ENCODE measurements at regions of chr1 and their contacts with region 1.

Region 1: DNA sequence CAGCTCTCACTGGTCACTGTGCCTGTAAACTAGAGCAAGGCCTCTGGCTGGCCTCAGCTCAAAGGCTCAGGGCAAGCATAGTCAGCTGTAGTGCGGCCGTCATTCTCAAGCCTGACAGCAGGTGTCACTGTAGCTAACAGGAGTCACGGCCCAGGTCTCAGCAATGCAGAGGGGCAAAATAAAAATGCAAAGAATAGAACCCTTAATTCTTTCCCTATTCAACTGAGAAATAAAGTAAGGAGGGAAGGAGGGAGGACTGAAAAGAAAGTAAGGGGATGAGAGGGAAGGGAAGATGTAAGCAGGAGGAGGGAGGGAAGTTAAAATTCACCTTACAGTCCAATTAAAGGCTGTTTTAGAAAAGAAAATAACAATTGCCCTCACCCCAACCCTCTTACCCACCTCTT is 106.1 kb downstream of the KIAA0319L start:
- DNase-seq: peak; percentile 86
- ATAC-seq: peak; percentile 96
- H3K4me3 Mint-ChIP-seq: no peak overlapping the region
- H3K27ac Mint-ChIP-seq: peak overlapping the region; percentile 85; the same call in 1 of the 2 replicates
- H3K4me1 Mint-ChIP-seq: no peaks in the 10 kb centered on the region
- H3K27me3 Mint-ChIP-seq: no peaks in the 10 kb centered on the region
- CTCF ChIP-seq: peak; percentile 67

Region 2: GRCh38 chr1:35398739-35399138 is 52.4 kb before region 1 on chr1:
- CTCF ChIA-PET with region 1: no interaction called
- POLR2A ChIA-PET with region 1: no interaction called
- DNase-seq: no peak
- ATAC-seq: no peak
- H3K4me3 Mint-ChIP-seq: no peak overlapping the region
- H3K27ac Mint-ChIP-seq: no peak overlapping the region
- H3K4me1 Mint-ChIP-seq: peaks cover 17% of the 10 kb centered on the region
- H3K27me3 Mint-ChIP-seq: no peaks in the 10 kb centered on the region
- CTCF ChIP-seq: no peak

Region 3: GRCh38 chr1:35436078-35436477 is 15.0 kb before region 1 on chr1:
- CTCF ChIA-PET with region 1: interaction called, 13 read pairs
- POLR2A ChIA-PET with region 1: no interaction called
- DNase-seq: no peak
- ATAC-seq: no peak
- H3K4me3 Mint-ChIP-seq: no peak overlapping the region
- H3K27ac Mint-ChIP-seq: no peak overlapping the region
- H3K4me1 Mint-ChIP-seq: no peaks in the 10 kb centered on the region
- H3K27me3 Mint-ChIP-seq: no peaks in the 10 kb centered on the region
- CTCF ChIP-seq: no peak

Region 4: DNA sequence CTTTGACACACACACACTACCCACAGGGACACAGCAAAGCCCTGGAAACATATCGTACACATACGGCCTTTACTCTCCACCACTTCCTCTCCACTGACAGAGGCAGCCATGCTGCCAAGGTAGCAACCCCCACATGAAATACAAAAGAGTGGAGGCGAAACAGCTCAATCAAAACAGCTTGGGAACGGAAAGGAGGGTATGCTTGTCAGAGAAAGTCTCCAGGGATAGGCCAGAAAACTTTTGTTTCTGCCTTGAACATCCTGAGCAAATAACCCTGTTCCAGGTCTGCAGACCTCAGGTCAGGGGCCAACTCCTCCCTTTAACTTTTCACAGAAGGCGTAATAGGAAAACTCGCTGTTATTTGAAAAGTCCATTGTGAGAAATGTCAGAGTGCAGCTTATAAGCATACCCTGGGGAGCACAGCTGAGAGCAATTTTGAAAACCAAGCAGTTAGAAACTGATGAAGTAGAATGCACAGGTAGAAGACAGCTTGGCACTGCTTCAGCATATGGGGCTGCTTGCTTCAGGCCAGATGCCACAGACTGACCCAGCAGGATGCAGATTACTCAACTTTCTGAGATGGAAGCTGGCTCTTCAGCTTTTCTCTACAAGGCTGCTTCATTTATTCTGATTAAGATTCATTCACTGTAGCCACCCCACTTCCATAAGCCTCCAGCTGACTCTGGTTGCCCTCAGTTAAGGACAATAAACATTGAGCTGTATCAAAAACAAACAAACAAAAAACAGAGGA is 88.1 kb after region 1 on chr1:
- CTCF ChIA-PET with region 1: interaction called, 86 read pairs
- POLR2A ChIA-PET with region 1: no interaction called
- DNase-seq: no peak
- ATAC-seq: peak; percentile 34
- H3K4me3 Mint-ChIP-seq: no peak overlapping the region
- H3K27ac Mint-ChIP-seq: peak overlapping the region; percentile 51; the same call in 1 of the 2 replicates
- H3K4me1 Mint-ChIP-seq: peaks cover 52% of the 10 kb centered on the region
- H3K27me3 Mint-ChIP-seq: no peaks in the 10 kb centered on the region
- CTCF ChIP-seq: no peak

Region 5: GRCh38 chr1:35544978-35545377 is 93.9 kb after region 1 on chr1:
- CTCF ChIA-PET with region 1: interaction called, 86 read pairs
- POLR2A ChIA-PET with region 1: interaction called, 3 read pairs
- DNase-seq: peak; percentile 66
- ATAC-seq: peak; percentile 99
- H3K4me3 Mint-ChIP-seq: no peak overlapping the region
- H3K27ac Mint-ChIP-seq: 0 out of 2 replicates have a peak overlapping the region, but pooled peaks have one; percentile 2
- H3K4me1 Mint-ChIP-seq: peaks cover 16% of the 10 kb centered on the region
- H3K27me3 Mint-ChIP-seq: no peaks in the 10 kb centered on the region
- CTCF ChIP-seq: no peak; the same call in 1 of the 2 replicates

Region 6: DNA sequence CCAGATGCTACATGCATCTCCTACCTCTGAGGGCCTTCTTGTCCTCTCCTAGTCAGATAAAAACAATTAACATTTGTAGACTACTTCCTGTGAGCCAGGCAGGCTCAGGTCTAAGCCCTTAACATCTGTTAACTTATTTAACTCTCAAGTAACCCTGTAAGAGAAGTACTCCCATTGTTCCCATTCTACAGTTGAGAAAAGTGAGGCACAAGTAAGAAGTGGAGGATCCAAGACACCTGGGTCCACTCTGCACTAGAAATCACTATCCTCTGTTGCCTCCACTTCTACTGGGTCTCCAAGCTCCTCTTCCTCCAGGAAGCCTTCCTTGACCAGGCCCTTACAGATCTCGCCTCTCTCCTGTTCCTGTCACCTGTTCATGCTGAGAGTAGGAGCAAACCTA is 257.8 kb after region 1 on chr1:
- CTCF ChIA-PET with region 1: no interaction called
- POLR2A ChIA-PET with region 1: no interaction called
- DNase-seq: no peak
- ATAC-seq: no peak
- H3K4me3 Mint-ChIP-seq: peak overlapping the region; percentile 75
- H3K27ac Mint-ChIP-seq: no peak overlapping the region
- H3K4me1 Mint-ChIP-seq: peaks cover 30% of the 10 kb centered on the region
- H3K27me3 Mint-ChIP-seq: peaks cover 48% of the 10 kb centered on the region
- CTCF ChIP-seq: no peak

Measured in WTC11 (cell line).